ENCODE measurements at regions of chr13 and their contacts with region 1.

Region 1: DNA sequence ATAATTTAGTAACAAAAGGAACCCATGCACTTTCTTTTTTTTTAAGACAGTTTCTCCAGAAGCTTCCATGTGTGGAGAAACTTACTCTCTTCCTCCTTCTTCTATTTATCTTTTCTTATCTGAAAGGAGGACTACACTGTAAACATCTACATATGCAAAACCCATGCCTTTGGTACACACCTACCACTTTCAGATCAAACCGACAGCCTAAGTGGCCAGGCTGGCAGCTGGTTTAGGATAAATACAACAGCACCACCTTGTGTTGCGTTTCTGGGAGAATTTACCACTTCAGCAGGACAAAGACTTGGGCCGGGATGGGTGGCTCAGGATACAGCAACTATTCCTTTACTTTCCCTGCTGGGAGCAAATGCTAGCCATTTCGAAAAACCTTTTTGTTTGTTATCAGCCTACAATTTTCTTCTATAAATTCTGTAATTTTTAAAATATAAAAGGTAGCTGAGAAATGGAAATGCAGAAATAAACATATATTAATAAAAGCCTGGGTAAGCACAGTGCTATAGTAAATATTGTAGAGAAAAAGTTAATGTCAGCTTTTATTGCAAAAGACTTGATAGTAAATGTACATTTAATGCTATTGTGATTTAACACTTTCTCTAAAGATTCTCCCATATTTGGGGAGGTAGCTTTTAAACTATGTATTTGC is 94.0 kb upstream of the RFC3 start:
- DNase-seq: peak; percentile 68 to 84 (median 79)
- ATAC-seq: peak; percentile 80 to 88 (median 85)
- H3K4me3 ChIP-seq: no peak overlapping the region
- H3K27ac ChIP-seq: peak overlapping the region in 11 of 12 donors; percentile 11 to 83 (median 63)
- H3K4me1 ChIP-seq: peaks cover 0 to 54% (median 36%) of the 10 kb centered on the region in 12 donors
- H3K27me3 ChIP-seq: no peaks in the 10 kb centered on the region
- CTCF ChIP-seq: peak; percentile 68 to 88 (median 80)
- POLR2A ChIP-seq: no peak

Region 2: DNA sequence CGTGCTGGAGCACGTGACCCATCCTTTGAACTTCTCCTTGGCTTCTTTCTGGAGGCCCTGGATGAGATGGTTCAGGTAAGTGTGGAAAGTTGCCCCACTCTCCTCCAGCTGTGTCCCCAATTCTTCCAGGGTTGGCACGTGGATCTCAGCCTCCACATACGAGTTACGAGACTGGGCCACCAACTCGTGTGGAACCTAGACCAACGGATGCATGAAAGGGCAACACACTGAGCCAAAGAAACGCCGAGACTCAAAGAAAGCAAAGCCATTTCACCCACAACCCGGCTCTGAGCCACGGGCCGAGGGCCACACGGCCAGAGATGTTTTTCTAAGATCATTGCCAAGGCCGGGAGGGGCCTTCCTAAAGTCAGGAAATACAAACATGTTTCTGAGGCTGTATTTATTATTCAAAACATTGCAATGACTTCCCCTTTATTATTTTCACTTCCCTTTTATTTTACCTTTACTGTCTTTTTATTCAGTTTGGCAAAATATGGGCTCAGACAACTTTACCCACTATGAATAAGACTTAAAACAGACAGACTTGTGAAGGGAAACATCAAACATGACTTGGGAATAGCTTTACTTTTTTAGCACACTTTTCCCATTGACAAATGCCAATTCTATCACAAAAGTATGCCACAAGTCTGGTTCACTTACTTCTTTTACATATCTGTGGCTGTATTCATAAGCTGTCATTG is 613.0 kb before region 1 on chr13:
- intact Hi-C with region 1: loop called in 1 of 10 experiments (anchors 10 kb)
- DNase-seq: peak; percentile 61 to 80 (median 67)
- ATAC-seq: peak in 3 of 4 donors; percentile 42 to 53 (median 47)
- H3K4me3 ChIP-seq: no peak overlapping the region
- H3K27ac ChIP-seq: peak overlapping the region; percentile 29 to 83 (median 60)
- H3K4me1 ChIP-seq: peaks cover 3 to 65% (median 53%) of the 10 kb centered on the region in 12 donors
- H3K27me3 ChIP-seq: no peaks in the 10 kb centered on the region
- CTCF ChIP-seq: no peak
- POLR2A ChIP-seq: no peak

Region 3: DNA sequence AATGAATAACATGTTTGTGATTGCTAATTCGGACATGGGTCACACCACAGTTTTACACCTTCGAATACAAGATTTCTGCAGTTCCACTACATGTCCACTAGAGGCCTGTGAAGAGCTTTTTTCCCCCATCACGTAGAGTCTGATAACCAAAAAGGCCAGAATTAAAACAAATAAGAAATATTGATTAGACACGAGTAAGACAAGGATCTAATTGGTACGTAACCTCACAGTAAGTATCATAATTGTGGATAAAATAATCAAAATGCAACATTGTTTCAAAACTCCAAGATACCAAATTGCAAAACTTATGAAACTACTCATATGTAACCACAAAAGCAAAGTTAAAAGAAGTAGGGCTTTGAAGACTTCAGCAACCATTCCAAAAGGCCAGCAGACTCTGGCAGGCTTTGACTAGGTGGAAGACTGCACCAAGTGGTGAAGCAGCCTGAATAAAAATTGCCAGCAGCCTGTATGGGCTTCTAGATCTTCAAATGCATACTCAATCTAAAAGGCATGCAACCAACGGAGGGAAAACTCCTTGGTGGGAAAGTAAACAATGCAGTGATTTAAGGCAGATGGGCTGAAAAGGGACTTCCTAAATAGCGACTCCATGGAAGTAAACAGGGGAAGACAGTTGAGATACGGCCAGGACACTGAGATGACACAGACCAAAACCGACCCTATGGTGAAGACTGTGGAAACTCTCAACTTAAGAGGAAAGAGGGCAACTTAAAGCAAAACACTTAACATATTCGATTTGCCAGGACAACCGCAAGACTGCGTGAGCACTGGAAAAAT is 495.1 kb before region 1 on chr13:
- intact Hi-C with region 1: loop called in 7 of 10 experiments (anchors 5 to 10 kb)
- DNase-seq: no peak
- ATAC-seq: peak in 2 of 4 donors; percentile 42 to 43
- H3K4me3 ChIP-seq: no peak overlapping the region
- H3K27ac ChIP-seq: peak overlapping the region; percentile 14 to 75 (median 63)
- H3K4me1 ChIP-seq: peaks cover 7 to 74% (median 47%) of the 10 kb centered on the region in 12 donors
- H3K27me3 ChIP-seq: no peaks in the 10 kb centered on the region
- CTCF ChIP-seq: peak; percentile 83 to 98 (median 93)
- POLR2A ChIP-seq: no peak

Region 4: GRCh38 chr13:33548069-33548468 is 175.8 kb before region 1 on chr13:
- intact Hi-C with region 1: loop called in 8 of 10 experiments (anchors 2 to 5 kb)
- DNase-seq: no peak
- ATAC-seq: no peak
- H3K4me3 ChIP-seq: no peak overlapping the region
- H3K27ac ChIP-seq: peak overlapping the region in 1 of 12 donors; percentile 40
- H3K4me1 ChIP-seq: peaks cover 0 to 32% (median 13%) of the 10 kb centered on the region in 12 donors
- H3K27me3 ChIP-seq: no peaks in the 10 kb centered on the region
- CTCF ChIP-seq: no peak
- POLR2A ChIP-seq: no peak

Region 5: GRCh38 chr13:33642374-33643068 is 81.4 kb before region 1 on chr13:
- intact Hi-C with region 1: loop called in 2 of 10 experiments (anchors 10 kb)
- DNase-seq: peak in 4 of 5 donors; percentile 54 to 73 (median 58)
- ATAC-seq: peak; percentile 68 to 81 (median 72)
- H3K4me3 ChIP-seq: no peak overlapping the region
- H3K27ac ChIP-seq: peak overlapping the region in 11 of 12 donors; percentile 7 to 78 (median 60)
- H3K4me1 ChIP-seq: peaks cover 0 to 63% (median 36%) of the 10 kb centered on the region in 12 donors
- H3K27me3 ChIP-seq: no peaks in the 10 kb centered on the region
- CTCF ChIP-seq: no peak
- POLR2A ChIP-seq: no peak

Region 6: DNA sequence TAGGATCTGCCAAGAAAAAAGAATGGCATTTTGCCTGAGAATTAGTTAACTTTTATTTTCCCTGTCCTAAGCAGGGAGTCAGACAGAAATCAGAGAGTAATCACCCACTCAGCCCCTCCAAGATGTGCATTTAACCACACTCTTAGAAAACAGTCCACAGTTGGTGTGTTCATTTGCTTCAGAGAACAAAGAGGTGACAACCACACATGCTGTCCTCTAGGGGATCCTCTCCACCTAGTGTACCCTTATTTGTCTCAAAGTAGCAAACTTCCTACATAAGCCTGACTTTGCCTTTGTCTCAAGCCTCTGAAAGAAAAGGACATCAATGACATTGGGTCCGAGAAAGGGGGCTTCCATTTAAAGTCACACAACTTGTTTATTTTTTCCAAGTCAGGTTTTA is 13.0 kb before region 1 on chr13:
- intact Hi-C with region 1: no loop called
- DNase-seq: no peak
- ATAC-seq: no peak
- H3K4me3 ChIP-seq: no peak overlapping the region
- H3K27ac ChIP-seq: no peak overlapping the region
- H3K4me1 ChIP-seq: peaks cover 0 to 2% (median 0%) of the 10 kb centered on the region in 12 donors
- H3K27me3 ChIP-seq: no peaks in the 10 kb centered on the region
- CTCF ChIP-seq: no peak
- POLR2A ChIP-seq: no peak